ENCODE measurements at regions of chr18 and their contacts with region 1.

Region 1: GRCh38 chr18:45686891-45687611 is 36.9 kb upstream of the SLC14A1 start:
- DNase-seq: no peak
- ATAC-seq: peak; percentile 53
- H3K4me3 ChIP-seq: no peak overlapping the region
- H3K27ac ChIP-seq: peak overlapping the region in 1 of 2 donors; percentile 70
- H3K4me1 ChIP-seq: peaks cover 0 to 28% of the 10 kb centered on the region in 2 donors
- H3K27me3 ChIP-seq: no peaks in the 10 kb centered on the region
- CTCF ChIP-seq: no peak

Region 2: DNA sequence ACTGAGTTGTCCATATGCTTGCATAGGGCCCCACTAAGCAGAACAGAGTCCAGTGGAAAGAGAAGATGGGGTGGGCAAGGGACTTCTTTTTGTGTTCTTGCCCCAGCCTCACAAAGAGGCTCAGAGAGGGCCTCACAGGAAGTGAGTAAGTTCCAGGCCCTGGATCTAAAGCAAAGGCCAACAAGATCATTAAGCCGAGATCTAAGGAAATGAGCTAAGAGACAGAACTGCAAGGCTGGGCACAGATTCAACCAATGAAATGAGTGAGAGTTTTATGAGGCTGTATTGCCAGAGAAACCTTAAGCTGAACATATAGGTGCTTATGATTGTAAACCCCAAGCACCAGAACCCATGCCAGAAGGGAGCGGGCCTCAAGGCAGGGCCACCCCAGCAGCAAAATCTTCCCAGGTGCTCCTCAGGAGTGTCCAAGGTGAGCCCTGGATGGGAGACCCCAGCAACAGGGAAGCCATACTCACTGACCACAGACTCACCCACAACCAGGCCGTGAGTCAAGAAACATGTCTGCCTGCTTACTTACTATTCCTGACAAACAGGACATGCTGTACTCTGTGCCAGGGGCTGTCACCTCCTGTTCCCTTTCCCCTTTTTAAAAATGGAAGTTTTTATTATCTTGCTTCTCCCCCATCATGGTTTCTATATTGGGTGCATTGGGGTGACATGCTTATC is 77.1 kb after region 1 on chr18:
- intact Hi-C with region 1: no loop called
- DNase-seq: no peak
- ATAC-seq: no peak
- H3K4me3 ChIP-seq: no peak overlapping the region
- H3K27ac ChIP-seq: no peak overlapping the region
- H3K4me1 ChIP-seq: no peaks in the 10 kb centered on the region
- H3K27me3 ChIP-seq: no peaks in the 10 kb centered on the region
- CTCF ChIP-seq: no peak

Region 3: GRCh38 chr18:45879681-45880655 is 192.9 kb after region 1 on chr18:
- intact Hi-C with region 1: loop called in 1 of 2 experiments (anchors 10 kb)
- DNase-seq: peak; percentile 52 to 94 (median 70)
- ATAC-seq: peak; percentile 99
- H3K4me3 ChIP-seq: no peak overlapping the region
- H3K27ac ChIP-seq: no peak overlapping the region
- H3K4me1 ChIP-seq: peaks cover 0 to 6% of the 10 kb centered on the region in 2 donors
- H3K27me3 ChIP-seq: no peaks in the 10 kb centered on the region
- CTCF ChIP-seq: peak; percentile 100

Region 4: GRCh38 chr18:46268671-46269070 is 581.6 kb after region 1 on chr18:
- intact Hi-C with region 1: no loop called
- DNase-seq: no peak
- ATAC-seq: no peak
- H3K4me3 ChIP-seq: no peak overlapping the region
- H3K27ac ChIP-seq: no peak overlapping the region
- H3K4me1 ChIP-seq: no peaks in the 10 kb centered on the region
- H3K27me3 ChIP-seq: no peaks in the 10 kb centered on the region
- CTCF ChIP-seq: no peak

Measured in left lung (tissue), 14 donors.